ENCODE measurements at regions of chr7 and their contacts with region 1.

Region 1: GRCh38 chr7:47337531-47337930 is 244.4 kb downstream of the TNS3 start:
- DNase-seq: no peak
- ATAC-seq: peak; percentile 29 to 76 (median 63)
- H3K4me3 ChIP-seq: no peak overlapping the region
- H3K27ac ChIP-seq: peak overlapping the region; percentile 77
- H3K4me1 ChIP-seq: peaks cover 28% of the 10 kb centered on the region
- H3K27me3 ChIP-seq: no peaks in the 10 kb centered on the region
- CTCF ChIP-seq: no peak

Region 2: DNA sequence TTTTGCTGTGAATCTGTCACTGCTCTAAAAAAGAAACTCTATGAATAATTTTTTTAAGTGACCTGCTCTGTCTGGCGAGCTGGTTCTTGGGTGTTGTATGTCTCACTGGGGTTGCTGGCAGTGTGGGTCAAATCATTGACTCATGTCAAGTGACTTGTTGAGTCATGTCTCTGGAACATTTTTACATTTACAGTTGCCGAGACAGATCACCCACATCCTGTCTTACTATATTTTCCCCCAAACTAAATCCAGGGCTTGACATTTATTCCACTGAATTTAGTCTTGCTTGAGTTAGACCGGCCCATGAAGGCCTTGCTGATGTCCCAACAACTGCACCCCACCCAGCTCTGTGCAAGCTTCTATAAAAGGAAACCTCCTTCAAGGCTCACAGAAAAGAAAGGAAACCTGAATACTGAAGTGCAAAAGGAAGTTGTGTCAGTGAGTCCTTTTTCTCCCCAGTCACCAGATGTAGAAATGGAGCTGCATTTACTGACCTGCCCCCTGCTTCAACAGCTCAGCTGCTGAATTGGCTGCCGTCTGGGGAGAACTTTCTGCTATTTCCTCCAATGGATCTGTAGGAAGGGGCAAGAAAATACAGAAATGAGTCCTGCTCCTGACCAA is 46.0 kb before region 1 on chr7:
- intact Hi-C with region 1: loop called in 1 of 2 experiments (anchors 5 kb)
- DNase-seq: no peak
- ATAC-seq: peak; percentile 85 to 89 (median 86)
- H3K4me3 ChIP-seq: no peak overlapping the region
- H3K27ac ChIP-seq: peak overlapping the region; percentile 85
- H3K4me1 ChIP-seq: peaks cover 33% of the 10 kb centered on the region
- H3K27me3 ChIP-seq: no peaks in the 10 kb centered on the region
- CTCF ChIP-seq: no peak

Region 3: DNA sequence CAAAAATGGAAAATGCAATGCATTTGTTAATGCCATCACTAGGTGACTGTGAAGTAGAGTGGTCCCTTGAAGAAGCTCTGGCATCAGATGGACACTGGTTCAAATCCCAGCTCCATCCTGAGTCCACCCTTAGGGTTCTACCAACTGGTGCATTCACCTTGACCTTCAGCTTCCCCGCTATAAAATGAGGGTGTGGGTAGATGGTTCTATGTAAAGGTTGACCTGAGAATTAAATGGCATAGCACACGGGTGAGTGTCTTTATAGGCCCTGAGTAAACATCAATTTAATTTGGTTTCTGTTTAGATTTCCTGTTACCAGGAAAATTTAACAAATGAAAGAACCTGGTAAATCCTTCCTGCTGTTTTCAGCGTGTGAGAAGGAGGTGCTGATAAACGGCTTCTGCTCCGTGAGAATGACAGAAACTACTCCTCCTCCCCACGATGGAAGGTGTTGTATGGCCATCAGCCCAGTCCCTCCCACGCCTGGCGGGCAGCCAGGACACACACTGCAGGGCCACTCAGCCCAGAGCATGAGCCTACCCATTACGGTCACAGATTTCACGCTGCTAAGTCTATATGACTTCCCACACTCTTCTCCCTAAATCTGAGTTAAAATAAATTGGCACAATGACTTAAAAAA is 34.3 kb after region 1 on chr7:
- intact Hi-C with region 1: loop called in 1 of 2 experiments (anchors 5 kb)
- DNase-seq: peak; percentile 67 to 73
- ATAC-seq: peak in 2 of 4 donors; percentile 38 to 48
- H3K4me3 ChIP-seq: no peak overlapping the region
- H3K27ac ChIP-seq: no peak overlapping the region
- H3K4me1 ChIP-seq: peaks cover 38% of the 10 kb centered on the region
- H3K27me3 ChIP-seq: no peaks in the 10 kb centered on the region
- CTCF ChIP-seq: no peak